PC-3 (cell line): ENCODE measurements at regions of chr13 and their contacts with region 1.

Region 1: GRCh38 chr13:95156208-95156607 is 145.0 kb downstream of the ABCC4 start:
- DNase-seq: peak; percentile 56
- ATAC-seq: no peak
- H3K4me3 ChIP-seq: no peak overlapping the region
- H3K27ac ChIP-seq: peak overlapping the region; percentile 98
- H3K4me1 ChIP-seq: peaks cover 33% of the 10 kb centered on the region
- H3K27me3 ChIP-seq: no peaks in the 10 kb centered on the region
- CTCF ChIP-seq: peak; percentile 75

Region 2: DNA sequence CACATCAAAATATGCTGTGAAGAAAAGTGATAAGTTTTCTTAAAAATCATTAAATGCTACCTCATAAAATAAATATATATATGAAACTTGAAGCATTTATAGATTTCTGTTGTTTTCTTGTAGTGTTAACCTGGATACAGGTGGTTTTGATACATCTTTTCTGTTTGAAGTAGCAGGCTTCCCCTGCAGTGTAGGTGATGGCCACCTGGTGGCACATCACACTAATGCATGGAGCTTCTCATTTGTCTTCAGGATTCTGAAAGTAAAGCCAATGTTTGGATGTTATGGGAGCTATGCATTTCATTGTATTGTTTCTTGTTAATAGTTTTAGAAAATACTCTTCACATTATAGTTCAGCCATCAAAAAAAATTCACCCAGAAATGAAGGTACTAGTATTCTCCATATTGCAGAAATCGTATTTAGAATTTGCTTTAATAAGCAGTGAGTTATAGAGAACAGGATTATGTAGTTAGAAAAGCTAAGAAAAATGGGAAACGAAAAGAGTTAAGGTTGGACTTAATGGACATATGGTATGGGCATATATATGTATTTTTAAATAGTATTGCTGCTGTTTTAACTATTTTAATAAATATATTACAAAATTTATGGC is 535.8 kb before region 1 on chr13:
- CTCF ChIA-PET with region 1: interaction called, 3 read pairs
- POLR2A ChIA-PET with region 1: no interaction called
- intact Hi-C with region 1: loop called (anchors 1 kb)
- DNase-seq: peak; percentile 61
- ATAC-seq: peak; percentile 67
- H3K4me3 ChIP-seq: no peak overlapping the region
- H3K27ac ChIP-seq: no peak overlapping the region
- H3K4me1 ChIP-seq: no peaks in the 10 kb centered on the region
- H3K27me3 ChIP-seq: no peaks in the 10 kb centered on the region
- CTCF ChIP-seq: peak; percentile 83

Region 3: DNA sequence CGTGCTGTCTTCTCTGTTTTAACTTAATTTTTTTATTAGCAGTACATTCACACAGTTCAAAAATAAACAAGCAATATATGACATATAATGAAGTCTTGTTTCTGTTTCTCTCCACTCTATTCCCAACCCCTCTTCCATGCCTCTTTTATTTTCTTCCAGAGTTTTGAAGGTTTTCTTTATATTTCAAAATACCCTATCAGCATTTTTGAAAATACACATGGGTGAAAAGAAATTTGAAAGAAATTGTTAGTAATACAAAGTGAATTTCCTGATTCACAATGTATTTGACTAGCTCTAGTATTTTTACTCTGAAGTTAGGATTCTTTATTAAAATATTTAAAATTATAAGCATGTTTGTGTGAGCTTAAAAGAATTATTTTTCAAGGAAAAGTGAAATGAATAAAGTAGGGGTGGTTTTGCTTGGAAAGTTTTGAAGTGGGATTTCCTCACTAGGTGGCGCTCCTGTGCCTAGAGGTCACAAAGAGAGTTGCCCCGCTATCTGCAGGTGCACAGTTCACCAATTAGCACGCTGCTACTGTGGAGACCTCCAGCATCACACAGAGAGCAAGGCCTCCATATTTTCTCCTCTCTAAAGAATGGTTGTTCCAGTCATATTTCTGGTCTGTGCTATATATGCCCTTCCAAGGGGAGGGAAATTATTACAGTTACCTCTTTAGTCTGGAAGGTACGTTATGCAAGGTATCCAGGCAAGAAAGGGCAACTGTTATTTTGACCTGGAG is 481.4 kb before region 1 on chr13:
- CTCF ChIA-PET with region 1: interaction called, 9 read pairs
- POLR2A ChIA-PET with region 1: interaction called, 7 read pairs
- intact Hi-C with region 1: loop called (anchors 1 kb)
- DNase-seq: peak; percentile 72
- ATAC-seq: peak; percentile 56
- H3K4me3 ChIP-seq: no peak overlapping the region
- H3K27ac ChIP-seq: no peak overlapping the region
- H3K4me1 ChIP-seq: peaks cover 10% of the 10 kb centered on the region
- H3K27me3 ChIP-seq: no peaks in the 10 kb centered on the region
- CTCF ChIP-seq: peak; percentile 75

Region 4: DNA sequence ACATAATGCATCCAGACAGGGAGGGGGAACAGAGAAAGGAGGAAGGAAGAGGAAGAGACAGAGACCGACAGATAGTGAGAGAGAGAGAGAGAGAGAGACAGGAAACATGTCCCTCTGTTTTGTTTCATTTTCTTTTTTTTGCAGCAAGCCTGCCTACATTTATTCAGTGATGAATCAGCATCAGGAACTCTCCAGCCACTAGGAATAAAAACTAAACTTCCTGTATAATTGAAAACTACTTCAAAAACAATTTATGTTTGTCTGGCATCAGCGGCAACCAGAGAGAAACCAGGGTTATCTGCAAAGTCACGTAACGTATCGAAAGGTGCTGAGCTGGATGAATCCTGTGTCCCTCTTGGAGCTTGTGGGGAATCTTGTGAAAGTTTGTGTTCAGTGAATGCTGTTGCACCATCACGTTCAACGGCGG is 295.2 kb before region 1 on chr13:
- CTCF ChIA-PET with region 1: no interaction called
- POLR2A ChIA-PET with region 1: no interaction called
- intact Hi-C with region 1: loop called (anchors 10 kb)
- DNase-seq: peak; percentile 31
- ATAC-seq: peak; percentile 77
- H3K4me3 ChIP-seq: peak overlapping the region; percentile 66
- H3K27ac ChIP-seq: peak overlapping the region; percentile 68
- H3K4me1 ChIP-seq: peaks cover 26% of the 10 kb centered on the region
- H3K27me3 ChIP-seq: no peaks in the 10 kb centered on the region
- CTCF ChIP-seq: no peak

Region 5: DNA sequence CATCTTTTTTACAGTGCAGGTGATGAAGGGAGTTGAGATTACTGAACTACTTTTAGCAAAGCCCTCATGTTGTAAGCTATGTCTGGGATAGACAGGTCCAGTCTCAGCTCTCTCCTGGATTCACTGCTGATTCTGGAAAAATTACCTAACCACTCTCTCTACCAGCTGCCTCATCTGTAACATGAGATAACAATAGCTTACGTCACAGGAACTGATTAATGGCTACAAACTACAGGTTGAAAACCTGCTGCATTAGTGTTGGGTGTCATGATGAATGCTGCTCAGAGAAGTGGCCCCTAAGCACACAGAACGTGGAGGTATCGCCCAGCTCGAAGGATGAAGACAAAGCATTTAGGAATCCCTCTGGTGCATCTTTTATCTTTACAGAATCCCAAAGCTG is 132.8 kb before region 1 on chr13:
- CTCF ChIA-PET with region 1: interaction called, 3 read pairs
- POLR2A ChIA-PET with region 1: no interaction called
- intact Hi-C with region 1: loop called (anchors 1 kb)
- DNase-seq: peak; percentile 77
- ATAC-seq: peak; percentile 46
- H3K4me3 ChIP-seq: no peak overlapping the region
- H3K27ac ChIP-seq: peak overlapping the region; percentile 99
- H3K4me1 ChIP-seq: peaks cover 48% of the 10 kb centered on the region
- H3K27me3 ChIP-seq: no peaks in the 10 kb centered on the region
- CTCF ChIP-seq: no peak

Region 6: DNA sequence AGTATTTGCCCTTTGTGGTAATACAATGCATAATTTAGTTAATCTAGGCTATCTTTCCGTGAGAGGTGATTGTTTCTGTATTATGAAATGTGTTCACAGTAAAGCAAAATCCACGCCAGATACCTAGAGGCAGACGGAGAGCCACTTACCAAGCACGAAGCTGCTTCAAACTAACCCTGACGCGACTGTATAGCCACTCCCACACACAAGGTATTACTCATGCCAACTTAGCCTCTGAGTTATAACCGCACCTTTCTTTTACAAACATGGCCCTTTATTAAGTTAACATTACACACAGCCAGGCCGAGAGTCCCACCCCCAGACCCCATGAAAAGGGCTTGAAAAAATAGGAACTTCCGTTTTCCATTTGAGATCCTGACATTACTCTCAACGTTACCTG is 40.7 kb before region 1 on chr13:
- CTCF ChIA-PET with region 1: no interaction called
- POLR2A ChIA-PET with region 1: no interaction called
- intact Hi-C with region 1: loop called (anchors 1 kb)
- DNase-seq: peak; percentile 93
- ATAC-seq: peak; percentile 91
- H3K4me3 ChIP-seq: peak overlapping the region; percentile 34
- H3K27ac ChIP-seq: peak overlapping the region; percentile 100
- H3K4me1 ChIP-seq: peaks cover 71% of the 10 kb centered on the region
- H3K27me3 ChIP-seq: no peaks in the 10 kb centered on the region
- CTCF ChIP-seq: no peak

Region 7: GRCh38 chr13:95176611-95177259 is 20.5 kb after region 1 on chr13:
- CTCF ChIA-PET with region 1: no interaction called
- POLR2A ChIA-PET with region 1: no interaction called
- intact Hi-C with region 1: no loop called
- DNase-seq: no peak
- ATAC-seq: no peak
- H3K4me3 ChIP-seq: no peak overlapping the region
- H3K27ac ChIP-seq: no peak overlapping the region
- H3K4me1 ChIP-seq: no peaks in the 10 kb centered on the region
- H3K27me3 ChIP-seq: no peaks in the 10 kb centered on the region
- CTCF ChIP-seq: no peak

Region 8: GRCh38 chr13:95463531-95463930 is 307.3 kb after region 1 on chr13:
- CTCF ChIA-PET with region 1: no interaction called
- POLR2A ChIA-PET with region 1: no interaction called
- intact Hi-C with region 1: no loop called
- DNase-seq: no peak
- ATAC-seq: no peak
- H3K4me3 ChIP-seq: no peak overlapping the region
- H3K27ac ChIP-seq: no peak overlapping the region
- H3K4me1 ChIP-seq: 0 out of 2 replicates have a peak, but pooled peaks cover 6% of the 10 kb centered on the region
- H3K27me3 ChIP-seq: no peaks in the 10 kb centered on the region
- CTCF ChIP-seq: no peak